Keratinocyte (primary cell): ENCODE measurements at regions of chr21 and their contacts with region 1.

Region 1: DNA sequence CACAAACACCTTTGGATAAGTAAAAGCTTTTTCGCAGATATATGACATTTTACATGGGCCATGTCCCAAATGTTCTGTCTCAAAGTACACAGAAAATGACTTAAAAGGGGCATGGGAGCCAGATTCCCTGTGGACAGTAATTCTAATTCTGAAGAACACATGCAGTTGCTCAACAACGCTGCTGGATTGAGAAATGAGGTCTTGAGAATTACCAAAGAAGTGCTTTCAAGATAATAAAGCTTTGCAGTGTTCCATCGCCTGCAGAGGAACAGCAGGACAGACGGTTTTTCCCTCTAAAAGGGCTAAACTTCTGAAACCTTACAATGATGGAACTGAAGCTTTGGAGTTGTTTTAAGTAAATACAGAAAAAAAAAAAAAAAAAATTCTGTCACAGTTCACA is 55.3 kb upstream of the HSPA13 start:
- DNase-seq: no peak
- H3K4me3 ChIP-seq: no peak overlapping the region
- H3K27ac ChIP-seq: no peak overlapping the region
- H3K4me1 ChIP-seq: no peaks in the 10 kb centered on the region
- H3K27me3 ChIP-seq: no peaks in the 10 kb centered on the region
- CTCF ChIP-seq: no peak

Region 2: DNA sequence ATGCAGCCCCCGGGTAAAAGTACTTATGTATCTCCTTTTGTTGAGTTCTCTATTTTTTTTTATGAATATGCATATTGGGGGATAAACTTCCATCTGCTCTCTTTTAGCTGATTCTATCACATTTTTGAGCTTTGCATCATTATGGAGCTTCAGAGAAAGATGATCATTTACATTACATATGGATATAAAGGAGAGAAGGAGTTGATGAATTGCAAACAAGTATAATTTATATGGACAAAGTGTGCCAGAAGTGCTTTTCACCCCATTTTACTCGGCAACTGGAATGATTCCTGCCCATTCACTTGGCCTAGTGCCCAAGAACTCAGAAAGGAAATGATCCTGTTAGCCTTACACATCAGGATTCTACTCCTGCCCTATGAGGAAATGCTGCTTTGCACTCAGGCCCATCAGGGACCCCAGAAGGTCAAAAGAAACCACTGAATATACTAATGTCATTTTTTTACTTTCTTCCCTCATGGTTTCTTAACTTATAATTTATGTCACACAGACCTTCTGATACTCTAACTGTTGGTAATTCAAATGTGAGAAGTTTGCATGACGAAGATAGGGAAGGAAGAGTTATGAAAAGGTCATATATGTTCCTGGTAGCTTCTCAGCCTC is 42.3 kb after region 1 on chr21:
- dilution Hi-C with region 1: no loop called
- DNase-seq: no peak
- H3K4me3 ChIP-seq: no peak overlapping the region
- H3K27ac ChIP-seq: no peak overlapping the region
- H3K4me1 ChIP-seq: no peaks in the 10 kb centered on the region
- H3K27me3 ChIP-seq: no peaks in the 10 kb centered on the region
- CTCF ChIP-seq: no peak

Region 3: DNA sequence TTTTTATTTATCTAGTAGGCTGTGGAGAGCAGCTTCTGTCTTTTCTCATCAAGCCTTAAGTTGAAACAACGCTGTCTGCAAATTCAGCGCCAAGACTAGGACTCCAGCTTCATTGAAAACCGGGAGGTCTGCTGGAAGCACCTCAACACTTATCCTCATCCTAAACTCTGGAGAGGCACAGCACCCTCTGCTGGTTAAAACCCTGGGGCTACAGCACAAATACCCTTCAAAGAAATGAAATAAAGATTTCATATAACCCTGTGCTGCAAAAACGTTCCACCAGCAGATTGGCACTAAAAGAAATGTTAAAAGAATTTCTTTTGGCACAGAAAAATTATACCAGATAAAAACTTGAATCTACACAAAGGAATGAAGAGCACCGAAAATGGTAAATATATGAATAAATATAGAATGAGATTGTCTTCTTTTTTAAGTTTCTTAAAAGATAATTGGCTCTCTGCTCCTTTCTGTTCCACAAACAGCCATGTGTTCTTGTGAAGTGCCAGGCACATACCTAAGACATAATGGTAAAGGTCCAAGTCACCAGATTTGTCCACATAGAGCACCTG is 335.6 kb after region 1 on chr21:
- dilution Hi-C with region 1: loop called (anchors 25 kb)
- DNase-seq: no peak
- H3K4me3 ChIP-seq: no peak overlapping the region
- H3K27ac ChIP-seq: no peak overlapping the region
- H3K4me1 ChIP-seq: no peaks in the 10 kb centered on the region
- H3K27me3 ChIP-seq: no peaks in the 10 kb centered on the region
- CTCF ChIP-seq: peak; percentile 53 to 73 (median 56)